IMR-90 (cell line): ENCODE measurements at regions of chr12 and their contacts with region 1.

Region 1: DNA sequence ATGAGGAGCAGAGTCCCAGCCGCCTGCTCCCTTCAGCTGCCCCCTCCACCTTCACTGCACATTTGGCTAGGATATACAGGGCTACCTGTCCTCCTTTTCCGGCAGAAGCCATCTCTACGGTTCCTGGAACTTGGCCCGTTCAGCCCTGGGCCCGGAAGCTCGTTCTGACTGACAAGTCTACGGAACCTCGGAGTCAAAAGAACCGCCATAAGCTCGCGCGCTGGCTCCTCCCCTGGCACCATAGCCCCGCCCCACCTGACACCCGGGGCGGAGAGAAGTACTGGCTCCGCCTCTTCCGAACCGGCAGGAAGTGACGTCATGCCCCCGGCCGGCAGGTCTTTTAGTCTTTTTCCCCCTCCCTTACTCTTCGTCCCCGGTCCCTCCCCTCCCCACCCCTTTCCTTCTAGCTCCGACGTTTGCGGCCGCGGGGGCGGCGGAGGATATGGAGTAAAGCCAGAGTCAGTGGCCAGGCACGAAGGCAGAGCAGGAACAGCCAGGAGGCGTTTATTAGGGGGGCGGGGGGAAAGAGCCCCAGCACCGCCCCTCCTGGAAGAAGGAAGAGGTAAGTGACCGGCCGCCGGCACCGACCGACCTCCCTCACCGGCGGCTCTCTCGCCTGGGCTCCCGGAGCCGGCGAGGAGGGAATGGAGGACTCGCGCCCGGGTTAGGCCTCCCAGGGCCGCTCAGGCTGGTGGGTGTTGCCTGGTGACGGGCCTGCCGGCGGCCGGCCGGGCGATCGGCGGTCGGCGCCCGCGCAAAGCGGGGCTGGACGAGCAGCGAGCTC is at the starts of genes DEPDC4 and SCYL2:
- DNase-seq: peak; percentile 98
- ATAC-seq: peak; percentile 91
- H3K4me3 ChIP-seq: peak within 1 kb of the TSS; percentile 89
- H3K27ac ChIP-seq: peak within 1 kb of the TSS; percentile 78
- H3K4me1 ChIP-seq: peaks cover 3% of the 10 kb centered on the region
- H3K27me3 ChIP-seq: no peaks in the 10 kb centered on the region
- CTCF ChIP-seq: no peak
- POLR2A ChIP-seq: peak; percentile 82
- RAD21 ChIP-seq: no peak
- total RNA-seq, gene DEPDC4: 0.72 and 7.5 TPM in 2 replicates
- total RNA-seq, gene SCYL2: 52.0 and 67.2 TPM in 2 replicates

Region 2: DNA sequence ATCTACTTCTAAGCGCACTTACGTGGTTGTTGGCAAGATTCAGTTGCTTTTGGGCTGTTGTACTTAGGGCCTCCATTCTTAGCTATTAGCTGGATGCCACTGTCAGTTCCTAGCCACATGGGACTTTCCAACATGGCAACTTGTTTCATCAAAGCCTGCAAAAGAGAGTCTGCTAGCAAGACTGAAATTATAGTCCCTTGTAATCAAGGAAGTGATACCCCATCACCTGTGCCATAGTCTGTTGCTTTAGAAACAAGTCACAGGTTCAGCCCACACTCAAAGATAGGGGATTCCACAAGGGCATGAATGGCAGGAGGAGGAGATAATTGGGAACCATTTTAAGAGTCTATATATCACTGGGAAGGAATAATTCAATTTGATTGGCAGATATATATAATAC is 62.8 kb after region 1 on chr12:
- CTCF ChIA-PET with region 1: no interaction called
- POLR2A ChIA-PET with region 1: no interaction called
- dilution Hi-C with region 1: no loop called
- in situ Hi-C with region 1: no loop called
- intact Hi-C with region 1: loop called (anchors 5 kb)
- DNase-seq: no peak
- ATAC-seq: no peak
- H3K4me3 ChIP-seq: no peak overlapping the region
- H3K27ac ChIP-seq: no peak overlapping the region
- H3K4me1 ChIP-seq: peaks cover 7% of the 10 kb centered on the region
- H3K27me3 ChIP-seq: no peaks in the 10 kb centered on the region
- CTCF ChIP-seq: no peak
- POLR2A ChIP-seq: no peak
- RAD21 ChIP-seq: no peak